A673 (cell line): ENCODE measurements at regions of chr18 and their contacts with region 1.

Region 1: GRCh38 chr18:58230438-58231179 is 186.6 kb downstream of the NEDD4L start:
- DNase-seq: no peak
- H3K4me3 ChIP-seq: no peak overlapping the region
- H3K27ac ChIP-seq: no peak overlapping the region
- H3K4me1 ChIP-seq: no peaks in the 10 kb centered on the region
- H3K27me3 ChIP-seq: no peaks in the 10 kb centered on the region
- CTCF ChIP-seq: no peak

Region 2: GRCh38 chr18:58241877-58242276 is 11.3 kb after region 1 on chr18:
- CTCF ChIA-PET with region 1: no interaction called
- POLR2A ChIA-PET with region 1: interaction called, 21 read pairs
- intact Hi-C with region 1: no loop called
- DNase-seq: peak; percentile 97
- H3K4me3 ChIP-seq: no peak overlapping the region
- H3K27ac ChIP-seq: peak overlapping the region; percentile 41
- H3K4me1 ChIP-seq: peaks cover 25% of the 10 kb centered on the region
- H3K27me3 ChIP-seq: no peaks in the 10 kb centered on the region
- CTCF ChIP-seq: no peak